ENCODE measurements at regions of chr6 and their contacts with region 1.

Region 1: GRCh38 chr6:108592371-108593337 is 31.9 kb downstream of the FOXO3 start:
- DNase-seq: peak; percentile 66 to 78
- ATAC-seq: peak; percentile 85 to 97 (median 91)
- H3K4me3 ChIP-seq: no peak overlapping the region
- H3K4me3 Mint-ChIP-seq: peak overlapping the region; percentile 71
- H3K27ac ChIP-seq: peak overlapping the region; percentile 34
- H3K27ac Mint-ChIP-seq: peak overlapping the region; percentile 69 to 73
- H3K4me1 ChIP-seq: peaks cover 33% of the 10 kb centered on the region
- H3K4me1 Mint-ChIP-seq: peaks cover 81 to 93% of the 10 kb centered on the region in 2 donors
- H3K27me3 ChIP-seq: no peaks in the 10 kb centered on the region
- H3K27me3 Mint-ChIP-seq: no peaks in the 10 kb centered on the region
- CTCF ChIP-seq: no peak

Region 2: DNA sequence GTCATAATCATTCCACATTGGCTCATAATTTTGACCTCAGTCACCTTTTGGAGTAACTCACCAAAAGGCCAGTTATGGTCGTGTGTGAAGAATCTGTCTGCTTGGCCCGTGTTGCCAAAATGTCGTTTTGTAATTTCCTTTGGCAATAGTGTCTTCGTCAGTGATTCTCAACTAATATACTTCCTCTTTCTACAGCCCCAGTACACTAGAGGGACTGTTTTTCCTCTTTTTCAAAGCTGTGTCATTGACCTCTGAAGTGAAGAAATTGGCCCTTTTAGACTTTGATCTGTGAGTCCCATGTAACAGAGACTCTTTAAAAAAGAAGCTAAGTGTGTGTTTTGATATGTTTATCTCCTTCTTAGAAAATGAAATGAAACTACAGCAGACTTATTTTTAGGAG is 26.8 kb before region 1 on chr6:
- intact Hi-C with region 1: loop called (anchors 2 kb)
- DNase-seq: peak in 1 of 2 donors; percentile 40
- ATAC-seq: peak; percentile 32 to 65 (median 36)
- H3K4me3 ChIP-seq: no peak overlapping the region
- H3K4me3 Mint-ChIP-seq: peak overlapping the region; percentile 76
- H3K27ac ChIP-seq: peak overlapping the region; percentile 68
- H3K27ac Mint-ChIP-seq: peak overlapping the region; percentile 79 to 91
- H3K4me1 ChIP-seq: peaks cover 38% of the 10 kb centered on the region
- H3K4me1 Mint-ChIP-seq: peaks cover 75 to 76% of the 10 kb centered on the region in 2 donors
- H3K27me3 ChIP-seq: no peaks in the 10 kb centered on the region
- H3K27me3 Mint-ChIP-seq: no peaks in the 10 kb centered on the region
- CTCF ChIP-seq: no peak

Region 3: DNA sequence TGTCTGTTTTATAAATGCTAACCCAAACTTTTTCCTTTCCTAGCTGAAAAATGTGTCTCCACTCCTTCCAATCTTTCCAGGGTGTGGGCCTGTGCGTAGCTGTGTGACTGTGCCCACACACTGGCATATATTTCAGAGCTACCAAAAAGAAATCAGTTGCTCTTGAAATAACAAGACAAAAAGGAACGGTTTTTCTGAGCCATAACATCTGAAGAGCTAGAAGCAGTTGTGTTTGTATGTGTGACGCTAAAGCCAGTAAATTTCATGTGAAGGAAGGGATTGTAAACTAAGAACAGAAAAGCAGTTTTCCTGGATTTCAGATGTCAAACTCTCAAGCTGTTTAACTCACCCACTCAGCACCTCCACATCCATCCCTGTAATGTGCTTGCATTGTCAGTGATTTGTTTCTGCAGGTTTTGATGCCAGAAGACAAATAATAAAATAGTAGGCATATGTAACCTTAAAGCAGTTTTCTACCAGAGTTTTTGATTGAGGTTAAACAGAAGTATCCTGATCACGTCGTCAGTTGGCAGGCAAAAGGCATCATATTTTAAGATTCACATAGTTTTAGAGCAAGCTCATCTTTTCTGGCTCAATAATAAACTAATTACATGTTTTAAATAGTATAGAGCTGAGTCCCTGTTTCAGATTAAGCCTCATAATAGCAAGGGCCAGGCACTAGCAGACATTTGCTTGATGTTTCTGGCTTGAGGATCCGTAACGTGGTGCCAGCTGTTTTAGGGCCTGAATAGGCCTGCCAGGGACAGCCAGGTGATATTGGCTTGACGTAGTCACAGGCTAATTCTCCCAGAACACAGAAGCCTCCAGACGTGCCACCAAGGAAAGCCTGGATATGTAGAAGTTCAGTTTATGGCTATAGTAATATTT is 58.9 kb after region 1 on chr6:
- intact Hi-C with region 1: no loop called
- DNase-seq: no peak
- ATAC-seq: no peak
- H3K4me3 ChIP-seq: no peak overlapping the region
- H3K4me3 Mint-ChIP-seq: no peak overlapping the region
- H3K27ac ChIP-seq: no peak overlapping the region
- H3K27ac Mint-ChIP-seq: peak overlapping the region; percentile 9 to 59
- H3K4me1 ChIP-seq: peaks cover 22% of the 10 kb centered on the region
- H3K4me1 Mint-ChIP-seq: peaks cover 56 to 70% of the 10 kb centered on the region in 2 donors
- H3K27me3 ChIP-seq: no peaks in the 10 kb centered on the region
- H3K27me3 Mint-ChIP-seq: no peaks in the 10 kb centered on the region
- CTCF ChIP-seq: no peak

Region 4: GRCh38 chr6:108699290-108700041 is 106.8 kb after region 1 on chr6:
- intact Hi-C with region 1: no loop called
- DNase-seq: no peak
- ATAC-seq: no peak
- H3K4me3 ChIP-seq: no peak overlapping the region
- H3K4me3 Mint-ChIP-seq: no peak overlapping the region
- H3K27ac ChIP-seq: no peak overlapping the region
- H3K27ac Mint-ChIP-seq: no peak overlapping the region
- H3K4me1 ChIP-seq: no peaks in the 10 kb centered on the region
- H3K4me1 Mint-ChIP-seq: peaks cover 5 to 9% of the 10 kb centered on the region in 2 donors
- H3K27me3 ChIP-seq: no peaks in the 10 kb centered on the region
- H3K27me3 Mint-ChIP-seq: no peaks in the 10 kb centered on the region
- CTCF ChIP-seq: no peak

Region 5: DNA sequence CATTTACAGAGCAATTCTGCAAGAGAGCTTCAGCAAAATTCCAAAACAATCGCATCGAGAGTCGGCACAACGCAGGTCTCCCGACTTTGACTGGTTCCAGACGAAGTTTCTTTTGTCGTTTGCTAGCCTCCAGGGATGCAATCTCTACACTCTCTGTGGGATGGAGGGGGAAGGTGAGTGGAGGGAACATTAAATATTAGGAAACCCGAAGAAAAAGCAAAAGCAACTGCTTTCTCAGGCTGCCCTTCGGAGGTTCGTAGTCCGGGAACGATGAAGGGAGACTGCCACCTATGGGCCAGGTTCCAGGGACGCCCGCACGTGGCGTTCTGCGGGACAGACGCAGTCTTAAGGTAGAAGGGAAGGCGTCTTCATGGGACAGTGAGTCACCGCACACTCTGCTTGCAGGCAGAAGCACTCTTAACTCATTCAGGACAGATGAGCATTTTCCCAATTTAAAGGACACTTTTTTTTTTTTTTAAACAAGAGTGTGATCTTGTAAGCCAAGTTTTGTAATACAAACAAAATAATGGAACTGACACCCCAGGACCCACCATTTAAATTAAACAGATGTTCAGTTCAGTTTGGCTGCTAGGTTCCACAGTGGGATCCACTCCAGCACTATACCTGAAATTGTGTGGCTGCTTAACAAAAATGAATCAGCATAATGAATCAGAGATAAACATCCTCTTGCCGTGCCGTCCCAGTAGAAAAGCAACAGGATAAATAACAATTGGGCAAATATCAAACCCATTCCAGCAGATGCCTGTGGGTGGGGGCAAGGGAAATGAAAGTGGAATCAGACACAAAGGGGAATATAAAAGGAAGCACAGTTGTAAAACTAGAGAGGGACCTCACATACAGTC is 189.8 kb after region 1 on chr6:
- intact Hi-C with region 1: no loop called
- DNase-seq: peak; percentile 59 to 87
- ATAC-seq: peak; percentile 93 to 99 (median 97)
- H3K4me3 ChIP-seq: peak overlapping the region; percentile 39
- H3K4me3 Mint-ChIP-seq: peak overlapping the region; percentile 86
- H3K27ac ChIP-seq: no peak overlapping the region
- H3K27ac Mint-ChIP-seq: peak overlapping the region in 1 of 2 donors; percentile 63
- H3K4me1 ChIP-seq: peaks cover 9% of the 10 kb centered on the region
- H3K4me1 Mint-ChIP-seq: peaks cover 12 to 17% of the 10 kb centered on the region in 2 donors
- H3K27me3 ChIP-seq: no peaks in the 10 kb centered on the region
- H3K27me3 Mint-ChIP-seq: peaks cover 8 to 10% of the 10 kb centered on the region in 2 donors
- CTCF ChIP-seq: peak; percentile 77